Activated naive CD4-positive, alpha-beta T cell treated with anti-CD3 and anti-CD28 coated beads for 36 hours (primary cell): ENCODE measurements at regions of chr3 and their contacts with region 1.

Region 1: GRCh38 chr3:107235928-107236315 is 141.3 kb upstream of the CCDC54 start:
- DNase-seq: peak; percentile 68
- H3K4me3 Mint-ChIP-seq: peak overlapping the region; percentile 47
- H3K27ac Mint-ChIP-seq: no peak overlapping the region
- H3K4me1 Mint-ChIP-seq: peaks cover 8% of the 10 kb centered on the region
- H3K27me3 Mint-ChIP-seq: peaks cover 8% of the 10 kb centered on the region

Region 2: DNA sequence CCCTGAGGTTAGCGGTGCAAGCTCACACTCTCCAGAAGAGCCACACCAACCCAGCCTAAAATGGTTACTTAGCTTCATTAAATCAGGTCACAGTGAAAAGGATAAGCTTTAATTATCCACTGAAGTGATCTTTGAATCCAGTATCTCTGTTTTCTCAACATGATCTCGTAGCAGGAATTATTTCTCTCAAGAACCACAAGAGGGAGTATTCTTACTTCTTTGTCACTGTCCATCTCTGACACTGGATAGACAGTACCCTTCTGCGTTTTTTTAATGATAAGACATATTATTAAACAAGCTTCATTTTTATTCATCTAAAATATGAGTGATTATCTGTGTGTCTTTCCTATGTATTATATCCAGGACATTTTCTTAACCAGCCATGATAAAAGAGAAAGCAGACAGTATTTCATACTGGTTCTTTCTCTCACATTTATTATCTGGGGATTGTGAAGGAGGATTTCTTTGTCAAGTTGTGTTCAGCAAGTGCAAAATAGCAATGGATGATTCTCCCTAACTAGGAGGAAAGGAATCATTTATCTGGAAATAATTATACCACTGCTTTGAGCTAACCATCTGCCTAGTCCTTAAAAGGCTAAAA is 36.0 kb after region 1 on chr3:
- CTCF ChIA-PET with region 1: interaction called, 11 read pairs
- intact Hi-C with region 1: loop called (anchors 1 kb)
- DNase-seq: no peak
- H3K4me3 Mint-ChIP-seq: no peak overlapping the region
- H3K27ac Mint-ChIP-seq: no peak overlapping the region
- H3K4me1 Mint-ChIP-seq: no peaks in the 10 kb centered on the region
- H3K27me3 Mint-ChIP-seq: peaks cover 8% of the 10 kb centered on the region

Region 3: GRCh38 chr3:107346564-107346963 is 110.6 kb after region 1 on chr3:
- CTCF ChIA-PET with region 1: no interaction called
- intact Hi-C with region 1: no loop called
- DNase-seq: no peak
- H3K4me3 Mint-ChIP-seq: no peak overlapping the region
- H3K27ac Mint-ChIP-seq: no peak overlapping the region
- H3K4me1 Mint-ChIP-seq: peaks cover 1% of the 10 kb centered on the region
- H3K27me3 Mint-ChIP-seq: no peaks in the 10 kb centered on the region

Region 4: GRCh38 chr3:107522510-107523288 is 286.8 kb after region 1 on chr3 and contains the start of gene BBX:
- CTCF ChIA-PET with region 1: no interaction called
- intact Hi-C with region 1: loop called (anchors 1 kb)
- DNase-seq: peak; percentile 94
- H3K4me3 Mint-ChIP-seq: peak within 1 kb of the TSS; percentile 92
- H3K27ac Mint-ChIP-seq: peak within 1 kb of the TSS; percentile 94
- H3K4me1 Mint-ChIP-seq: peaks cover 23% of the 10 kb centered on the region
- H3K27me3 Mint-ChIP-seq: no peaks in the 10 kb centered on the region
- total RNA-seq, gene BBX: 43.1 to 48.6 TPM

Region 5: GRCh38 chr3:107660306-107660976 is 424.5 kb after region 1 on chr3:
- CTCF ChIA-PET with region 1: interaction called, 3 read pairs
- intact Hi-C with region 1: loop called (anchors 5 kb)
- DNase-seq: no peak
- H3K4me3 Mint-ChIP-seq: no peak overlapping the region
- H3K27ac Mint-ChIP-seq: no peak overlapping the region
- H3K4me1 Mint-ChIP-seq: peaks cover 21% of the 10 kb centered on the region
- H3K27me3 Mint-ChIP-seq: no peaks in the 10 kb centered on the region

Region 6: GRCh38 chr3:107846279-107846852 is 610.4 kb after region 1 on chr3:
- CTCF ChIA-PET with region 1: no interaction called
- intact Hi-C with region 1: loop called (anchors 5 kb)
- DNase-seq: peak; percentile 65
- H3K4me3 Mint-ChIP-seq: no peak overlapping the region
- H3K27ac Mint-ChIP-seq: no peak overlapping the region
- H3K4me1 Mint-ChIP-seq: no peaks in the 10 kb centered on the region
- H3K27me3 Mint-ChIP-seq: no peaks in the 10 kb centered on the region

Region 7: GRCh38 chr3:108477511-108478147 is 1241.7 kb after region 1 on chr3:
- CTCF ChIA-PET with region 1: no interaction called
- intact Hi-C with region 1: loop called (anchors 2 kb)
- DNase-seq: peak; percentile 75
- H3K4me3 Mint-ChIP-seq: no peak overlapping the region
- H3K27ac Mint-ChIP-seq: no peak overlapping the region
- H3K4me1 Mint-ChIP-seq: no peaks in the 10 kb centered on the region
- H3K27me3 Mint-ChIP-seq: no peaks in the 10 kb centered on the region